ENCODE measurements at regions of chrX and their contacts with region 1.

Region 1: DNA sequence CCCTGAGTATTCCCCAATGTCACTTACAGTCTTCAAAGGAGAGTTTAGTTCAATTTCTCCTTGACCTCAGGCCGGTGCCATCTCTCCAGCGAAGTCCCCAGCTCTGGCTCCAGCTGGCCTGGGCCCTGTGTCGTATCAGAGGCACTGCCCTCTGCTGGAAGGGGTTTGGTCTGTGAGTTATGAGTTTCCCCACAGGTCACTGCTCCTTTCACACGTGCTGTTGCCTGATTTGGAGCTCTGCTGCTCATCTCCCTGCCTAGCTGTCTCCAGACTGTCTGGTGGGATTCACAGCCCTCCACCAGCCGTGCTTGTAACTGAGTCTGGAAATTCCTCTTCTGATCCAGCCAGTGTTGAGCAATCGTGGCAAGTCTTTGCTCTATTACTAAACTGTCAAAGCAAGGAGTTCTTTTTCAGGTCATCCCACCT is at the start of gene RAP2C:
- DNase-seq: peak; percentile 74
- H3K4me3 ChIP-seq: peak within 1 kb of the TSS; percentile 74 to 81
- H3K27ac ChIP-seq: peak within 1 kb of the TSS; percentile 68 to 83
- H3K4me1 ChIP-seq: peaks cover 0 to 5% of the 10 kb centered on the region in 2 experiments; a peak in 2 of 4 replicates
- H3K27me3 ChIP-seq: no peaks in the 10 kb centered on the region
- CTCF ChIP-seq: peak; percentile 74
- EP300 ChIP-seq: no peak
- RAD21 ChIP-seq: peak; percentile 66
- polyA plus RNA-seq, gene RAP2C: 5.5 and 6.8 TPM in 2 replicates

Region 2: GRCh38 chrX:132092439-132093065 is 126.8 kb before region 1 on chrX:
- CTCF ChIA-PET with region 1: interaction called, 66 read pairs
- POLR2A ChIA-PET with region 1: interaction called, 19 read pairs
- DNase-seq: peak; percentile 28
- H3K4me3 ChIP-seq: no peak overlapping the region
- H3K27ac ChIP-seq: peak overlapping the region in 1 of 2 experiments; percentile 85; a peak in 2 of 4 replicates
- H3K4me1 ChIP-seq: peaks cover 0 to 18% of the 10 kb centered on the region in 2 experiments; a peak in 1 of 4 replicates
- H3K27me3 ChIP-seq: no peaks in the 10 kb centered on the region; the same call in 1 of the 2 replicates
- CTCF ChIP-seq: peak; percentile 79
- EP300 ChIP-seq: no peak
- RAD21 ChIP-seq: peak; percentile 79

Region 3: DNA sequence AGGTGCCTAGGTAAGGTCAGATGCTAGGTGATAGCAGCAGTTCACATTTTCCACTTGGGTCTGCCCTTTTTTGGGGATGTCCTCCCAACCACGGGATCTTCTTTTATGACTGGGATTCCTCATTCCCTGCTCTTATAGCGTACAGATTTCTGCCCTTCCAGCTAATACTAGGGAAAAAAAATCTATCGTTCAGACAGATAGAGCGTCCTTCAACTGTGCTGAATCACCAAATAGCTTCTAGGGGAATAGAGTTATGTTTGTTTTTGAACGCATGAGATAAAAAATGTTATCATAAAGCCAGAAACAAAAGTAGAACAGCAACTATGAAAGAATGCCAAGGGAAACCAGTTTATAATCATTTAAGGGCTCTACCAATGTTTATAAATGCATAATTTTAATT is 13.1 kb before region 1 on chrX:
- CTCF ChIA-PET with region 1: interaction called, 13 read pairs
- POLR2A ChIA-PET with region 1: interaction called, 3 read pairs
- DNase-seq: no peak
- H3K4me3 ChIP-seq: no peak overlapping the region
- H3K27ac ChIP-seq: no peak overlapping the region
- H3K4me1 ChIP-seq: no peaks in the 10 kb centered on the region
- H3K27me3 ChIP-seq: no peaks in the 10 kb centered on the region
- CTCF ChIP-seq: no peak
- EP300 ChIP-seq: no peak
- RAD21 ChIP-seq: no peak

Region 4: GRCh38 chrX:132461886-132462285 is 242.5 kb after region 1 on chrX:
- CTCF ChIA-PET with region 1: no interaction called
- POLR2A ChIA-PET with region 1: no interaction called
- DNase-seq: no peak
- H3K4me3 ChIP-seq: no peak overlapping the region
- H3K27ac ChIP-seq: no peak overlapping the region
- H3K4me1 ChIP-seq: no peaks in the 10 kb centered on the region
- H3K27me3 ChIP-seq: no peaks in the 10 kb centered on the region
- CTCF ChIP-seq: no peak
- EP300 ChIP-seq: no peak
- RAD21 ChIP-seq: no peak